ENCODE measurements at regions of chr4 and their contacts with region 1.

Region 1: GRCh38 chr4:38069271-38069760 is 109.1 kb downstream of the PTTG2 start:
- DNase-seq: peak; percentile 53
- ATAC-seq: peak; percentile 92
- H3K4me3 Mint-ChIP-seq: no peak overlapping the region
- H3K27ac Mint-ChIP-seq: peak overlapping the region; percentile 57
- H3K4me1 Mint-ChIP-seq: peaks cover 24% of the 10 kb centered on the region
- H3K27me3 Mint-ChIP-seq: no peaks in the 10 kb centered on the region
- CTCF ChIP-seq: 0 out of 2 replicates have a peak, but pooled peaks have one; percentile 13

Region 2: DNA sequence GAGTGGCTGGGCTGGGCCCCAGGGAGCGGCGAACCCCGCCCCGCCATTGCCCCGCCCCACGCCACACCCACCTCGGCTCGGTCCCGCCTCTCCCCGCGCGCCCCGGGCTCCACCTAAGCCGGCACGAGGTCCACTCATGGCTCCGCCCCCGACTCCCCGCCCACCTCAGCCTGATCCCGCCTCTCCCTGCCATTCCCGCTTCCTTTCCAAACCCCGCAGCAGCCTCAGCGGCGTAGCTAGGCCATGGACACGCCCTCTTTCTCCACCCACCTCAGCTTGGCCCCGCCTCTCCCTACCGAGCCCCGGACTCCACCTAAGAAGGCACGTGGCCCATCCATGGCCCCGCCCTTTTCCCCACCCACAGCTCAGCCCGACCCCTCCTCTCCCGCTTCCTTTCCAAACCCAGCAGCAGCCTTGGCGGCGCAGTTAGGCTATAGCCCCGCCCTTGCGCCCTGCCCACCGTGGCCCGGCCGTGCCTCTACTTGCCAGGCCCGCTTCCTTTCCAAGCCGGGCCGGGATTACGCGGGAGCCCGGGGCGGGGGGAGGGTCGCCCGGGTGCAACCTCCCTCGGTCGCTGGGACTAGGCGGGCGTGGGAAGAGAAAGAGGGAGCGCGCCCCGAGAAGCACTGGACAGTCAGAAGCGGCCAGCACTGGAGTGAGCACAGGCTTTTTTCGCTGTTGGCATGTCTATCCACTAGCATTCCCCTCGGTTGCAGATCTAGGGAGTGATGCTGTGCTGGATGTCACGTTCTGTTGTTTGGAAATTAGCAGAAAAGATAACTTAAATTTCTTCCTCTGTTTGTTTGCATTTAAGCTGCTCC is 382.7 kb before region 1 on chr4 and contains the start of gene RELL1:
- CTCF ChIA-PET with region 1: no interaction called
- POLR2A ChIA-PET with region 1: no interaction called
- DNase-seq: peak; percentile 100
- ATAC-seq: peak; percentile 93
- H3K4me3 Mint-ChIP-seq: peak within 1 kb of the TSS; percentile 80
- H3K27ac Mint-ChIP-seq: no peak within 1 kb of the TSS; the same call in 1 of the 2 replicates
- H3K4me1 Mint-ChIP-seq: peaks cover 35% of the 10 kb centered on the region
- H3K27me3 Mint-ChIP-seq: peaks cover 25% of the 10 kb centered on the region
- CTCF ChIP-seq: no peak
- total RNA-seq, gene RELL1: 10.1 to 14.4 TPM (median 12.5 TPM) in 3 replicates

Region 3: DNA sequence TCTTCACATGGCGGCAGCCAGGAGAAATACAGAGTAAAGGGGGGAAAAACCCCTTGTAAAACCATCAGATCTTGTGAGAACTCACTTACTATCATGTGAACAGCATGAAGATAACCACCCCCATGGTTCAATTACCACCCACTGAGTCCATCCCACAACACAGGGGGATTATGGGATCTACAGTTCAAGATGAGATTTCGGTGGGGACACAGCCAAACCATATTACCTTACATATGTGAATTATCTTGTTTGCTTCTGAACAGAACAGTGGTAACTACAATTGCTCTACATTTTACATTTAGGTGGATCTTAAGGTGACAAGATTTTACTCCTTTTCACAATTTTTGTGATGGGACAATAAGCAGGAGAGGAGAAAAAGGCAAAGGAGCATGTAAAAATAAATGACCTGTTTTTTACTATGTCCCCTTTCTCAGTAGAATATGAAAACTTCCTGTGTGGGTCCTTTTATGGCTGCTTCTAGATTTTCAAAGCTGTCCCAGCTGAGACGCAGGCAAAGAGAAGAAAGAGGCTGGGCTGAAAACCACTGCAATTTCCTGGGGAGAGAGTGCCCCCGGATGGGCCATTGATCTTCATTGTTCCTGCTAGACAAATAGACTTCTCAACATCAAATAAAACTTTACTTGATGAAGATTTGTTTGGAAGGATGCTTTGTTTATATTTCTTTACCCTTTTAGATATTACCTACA is 288.7 kb before region 1 on chr4:
- CTCF ChIA-PET with region 1: no interaction called
- POLR2A ChIA-PET with region 1: no interaction called
- DNase-seq: no peak
- ATAC-seq: no peak; the same call in 1 of the 2 replicates
- H3K4me3 Mint-ChIP-seq: no peak overlapping the region
- H3K27ac Mint-ChIP-seq: no peak overlapping the region
- H3K4me1 Mint-ChIP-seq: peaks cover 13% of the 10 kb centered on the region
- H3K27me3 Mint-ChIP-seq: peaks cover 4% of the 10 kb centered on the region; the same call in 1 of the 2 replicates
- CTCF ChIP-seq: no peak

Region 4: GRCh38 chr4:38114386-38115150 is 45.3 kb after region 1 on chr4:
- CTCF ChIA-PET with region 1: interaction called, 42 read pairs
- POLR2A ChIA-PET with region 1: interaction called, 6 read pairs
- DNase-seq: no peak
- ATAC-seq: peak; percentile 80
- H3K4me3 Mint-ChIP-seq: no peak overlapping the region
- H3K27ac Mint-ChIP-seq: peak overlapping the region; percentile 93
- H3K4me1 Mint-ChIP-seq: peaks cover 67% of the 10 kb centered on the region
- H3K27me3 Mint-ChIP-seq: no peaks in the 10 kb centered on the region
- CTCF ChIP-seq: no peak

Region 5: DNA sequence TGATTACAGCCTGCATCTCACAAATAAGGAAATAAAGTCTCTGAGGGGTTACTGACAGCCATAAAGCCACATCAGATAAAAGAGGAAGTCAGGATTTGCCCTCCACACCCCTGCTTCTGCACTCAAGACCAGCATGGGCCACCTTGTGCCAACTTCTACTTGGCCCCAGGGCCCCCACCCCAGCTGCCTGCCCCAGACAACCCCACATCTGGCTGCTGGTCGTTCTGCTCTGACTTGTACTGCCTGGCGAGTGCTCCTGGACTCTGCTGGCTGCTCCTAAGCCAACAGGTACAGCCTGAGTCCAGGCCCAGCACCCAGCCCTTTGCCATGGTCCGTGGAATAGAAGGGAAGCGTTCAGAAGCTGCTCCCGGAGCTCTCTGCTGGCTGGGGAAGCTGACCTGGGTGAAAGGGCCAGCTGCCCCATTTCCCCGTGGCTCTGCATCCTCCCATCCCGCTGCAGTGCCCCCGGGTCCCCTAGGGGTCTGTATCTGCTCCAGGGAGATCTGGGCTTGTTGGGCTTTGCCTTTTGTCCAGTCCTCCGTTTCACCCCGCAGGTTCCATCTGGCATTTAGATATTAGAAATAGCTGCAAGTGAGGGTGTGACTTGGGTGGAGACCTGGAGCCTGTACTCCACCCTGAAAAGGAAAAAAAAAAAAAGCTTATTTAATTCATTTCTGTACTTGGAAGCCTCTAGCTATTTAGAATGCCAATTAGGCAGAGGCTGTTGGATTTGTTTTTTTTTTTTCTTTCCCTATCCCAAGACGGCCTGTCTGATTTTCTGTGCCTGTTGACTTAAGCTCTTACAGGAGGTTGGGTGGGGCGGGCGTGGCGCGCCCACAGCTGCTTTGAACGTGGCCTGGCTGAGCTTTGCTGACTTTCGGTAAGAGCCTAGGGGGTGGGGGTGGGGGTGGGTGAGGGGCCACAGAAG is 85.6 kb after region 1 on chr4:
- CTCF ChIA-PET with region 1: interaction called, 13 read pairs
- POLR2A ChIA-PET with region 1: no interaction called
- DNase-seq: no peak
- ATAC-seq: peak; percentile 52
- H3K4me3 Mint-ChIP-seq: no peak overlapping the region
- H3K27ac Mint-ChIP-seq: no peak overlapping the region
- H3K4me1 Mint-ChIP-seq: peaks cover 20% of the 10 kb centered on the region
- H3K27me3 Mint-ChIP-seq: no peaks in the 10 kb centered on the region; the same call in 1 of the 2 replicates
- CTCF ChIP-seq: no peak

Region 6: DNA sequence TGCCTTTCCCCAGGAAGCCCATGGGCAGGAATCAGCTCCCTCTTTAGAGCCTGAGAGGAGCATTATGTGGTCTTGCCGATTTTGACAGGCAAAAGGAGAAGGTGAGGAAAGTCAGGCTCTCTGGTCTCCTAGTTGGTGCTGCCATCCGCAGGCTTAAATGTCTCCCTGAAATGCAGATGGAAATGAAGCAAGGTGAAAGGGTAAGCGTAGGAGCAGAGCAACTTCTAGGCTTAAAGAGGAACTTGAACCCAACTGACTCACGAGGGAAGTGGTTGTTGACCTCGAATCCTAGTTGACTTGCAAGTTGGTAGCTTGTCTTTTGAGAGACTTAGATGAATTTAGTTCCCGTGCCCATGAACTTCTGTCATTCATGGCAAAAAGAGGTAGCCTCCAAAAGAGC is 96.8 kb after region 1 on chr4:
- CTCF ChIA-PET with region 1: interaction called, 13 read pairs
- POLR2A ChIA-PET with region 1: no interaction called
- DNase-seq: no peak
- ATAC-seq: peak; percentile 61; the same call in 1 of the 2 replicates
- H3K4me3 Mint-ChIP-seq: no peak overlapping the region
- H3K27ac Mint-ChIP-seq: no peak overlapping the region
- H3K4me1 Mint-ChIP-seq: peaks cover 14% of the 10 kb centered on the region
- H3K27me3 Mint-ChIP-seq: no peaks in the 10 kb centered on the region; the same call in 1 of the 2 replicates
- CTCF ChIP-seq: no peak

Region 7: DNA sequence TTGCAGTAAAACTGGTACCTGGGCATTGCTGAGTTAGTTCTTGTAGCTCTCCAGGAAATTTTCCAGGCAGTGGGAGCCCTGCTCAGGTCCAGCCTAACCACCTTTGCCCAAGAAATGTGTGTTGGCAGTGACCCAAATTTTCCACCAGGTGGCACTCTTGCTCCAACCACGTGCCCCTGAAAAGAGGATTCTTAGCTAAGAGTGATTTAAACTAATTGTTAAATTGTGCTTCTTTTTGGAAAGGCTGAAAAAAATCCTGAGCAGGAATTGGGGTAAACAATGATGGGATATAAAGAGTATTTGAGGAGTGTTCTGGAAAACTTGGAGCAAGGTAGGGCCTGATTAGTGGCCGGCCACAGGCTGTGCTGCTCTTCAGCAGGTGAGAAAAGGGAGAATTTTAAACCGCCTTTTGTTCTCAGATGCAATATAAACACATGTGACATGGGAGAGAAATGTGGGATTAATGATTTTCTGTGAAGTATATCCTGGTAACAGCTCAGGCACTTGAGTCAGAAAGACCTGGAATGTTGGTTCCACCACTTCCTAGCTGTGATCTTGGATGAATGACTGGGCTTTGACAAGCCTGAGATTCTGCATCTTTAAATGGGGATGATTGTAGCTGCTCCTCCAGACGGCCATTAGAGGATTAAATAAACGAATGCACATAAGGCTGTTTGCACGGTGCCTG is 110.5 kb after region 1 on chr4:
- CTCF ChIA-PET with region 1: interaction called, 36 read pairs
- POLR2A ChIA-PET with region 1: no interaction called
- DNase-seq: peak; percentile 81
- ATAC-seq: peak; percentile 78
- H3K4me3 Mint-ChIP-seq: no peak overlapping the region
- H3K27ac Mint-ChIP-seq: no peak overlapping the region
- H3K4me1 Mint-ChIP-seq: peaks cover 7% of the 10 kb centered on the region
- H3K27me3 Mint-ChIP-seq: peaks cover 8% of the 10 kb centered on the region
- CTCF ChIP-seq: peak; percentile 91

Region 8: GRCh38 chr4:38482696-38483095 is 413.4 kb after region 1 on chr4:
- CTCF ChIA-PET with region 1: no interaction called
- POLR2A ChIA-PET with region 1: no interaction called
- DNase-seq: no peak
- ATAC-seq: no peak
- H3K4me3 Mint-ChIP-seq: no peak overlapping the region
- H3K27ac Mint-ChIP-seq: no peak overlapping the region
- H3K4me1 Mint-ChIP-seq: peaks cover 4% of the 10 kb centered on the region
- H3K27me3 Mint-ChIP-seq: no peaks in the 10 kb centered on the region
- CTCF ChIP-seq: no peak

Measured in WTC11 (cell line).